ENCODE measurements at regions of chr9 and their contacts with region 1.

Region 1: GRCh38 chr9:91164724-91165520 is 196.8 kb downstream of the AUH start:
- DNase-seq: peak; percentile 82
- H3K4me3 Mint-ChIP-seq: peak overlapping the region; percentile 84
- H3K27ac Mint-ChIP-seq: peak overlapping the region; percentile 98
- H3K4me1 Mint-ChIP-seq: peaks cover 58% of the 10 kb centered on the region
- H3K27me3 Mint-ChIP-seq: no peaks in the 10 kb centered on the region

Region 2: DNA sequence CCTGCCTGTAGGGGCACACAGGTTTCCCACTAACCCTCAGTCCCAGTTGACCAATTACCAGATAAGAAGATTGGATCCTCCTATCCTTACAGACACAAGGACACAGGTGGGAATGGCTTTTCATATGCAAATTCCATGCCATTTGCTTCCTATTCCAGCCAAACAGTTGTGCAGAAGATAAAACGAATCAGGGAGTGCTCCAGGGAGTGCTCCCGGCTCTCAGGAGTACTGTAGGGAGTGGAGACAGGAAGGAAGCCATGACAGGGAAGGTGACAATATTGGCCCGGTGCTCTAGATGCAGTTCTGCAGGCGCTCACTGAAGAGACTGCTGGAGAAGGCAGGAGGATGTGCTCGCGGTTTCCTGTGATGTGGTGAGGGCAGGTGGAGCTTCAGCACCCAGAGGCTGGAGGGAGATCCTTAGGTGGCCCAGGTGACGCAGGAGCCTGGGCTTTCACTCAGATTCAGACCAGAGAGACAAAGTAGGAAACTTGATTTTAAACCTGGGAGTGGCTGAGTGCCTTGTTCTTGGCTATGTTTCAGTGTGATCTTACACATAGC is 63.2 kb before region 1 on chr9:
- intact Hi-C with region 1: loop called (anchors 2 kb)
- DNase-seq: peak; percentile 85
- H3K4me3 Mint-ChIP-seq: peak overlapping the region; percentile 78
- H3K27ac Mint-ChIP-seq: peak overlapping the region; percentile 93
- H3K4me1 Mint-ChIP-seq: peaks cover 64% of the 10 kb centered on the region
- H3K27me3 Mint-ChIP-seq: no peaks in the 10 kb centered on the region

Region 3: GRCh38 chr9:91177661-91178280 is 12.8 kb after region 1 on chr9:
- intact Hi-C with region 1: loop called (anchors 1 kb)
- DNase-seq: peak; percentile 30
- H3K4me3 Mint-ChIP-seq: peak overlapping the region; percentile 41
- H3K27ac Mint-ChIP-seq: peak overlapping the region; percentile 99
- H3K4me1 Mint-ChIP-seq: peaks cover 55% of the 10 kb centered on the region
- H3K27me3 Mint-ChIP-seq: no peaks in the 10 kb centered on the region

Region 4: GRCh38 chr9:91241909-91242308 is 77.0 kb after region 1 on chr9:
- intact Hi-C with region 1: no loop called
- DNase-seq: no peak
- H3K4me3 Mint-ChIP-seq: no peak overlapping the region
- H3K27ac Mint-ChIP-seq: no peak overlapping the region
- H3K4me1 Mint-ChIP-seq: peaks cover 48% of the 10 kb centered on the region
- H3K27me3 Mint-ChIP-seq: no peaks in the 10 kb centered on the region

Region 5: DNA sequence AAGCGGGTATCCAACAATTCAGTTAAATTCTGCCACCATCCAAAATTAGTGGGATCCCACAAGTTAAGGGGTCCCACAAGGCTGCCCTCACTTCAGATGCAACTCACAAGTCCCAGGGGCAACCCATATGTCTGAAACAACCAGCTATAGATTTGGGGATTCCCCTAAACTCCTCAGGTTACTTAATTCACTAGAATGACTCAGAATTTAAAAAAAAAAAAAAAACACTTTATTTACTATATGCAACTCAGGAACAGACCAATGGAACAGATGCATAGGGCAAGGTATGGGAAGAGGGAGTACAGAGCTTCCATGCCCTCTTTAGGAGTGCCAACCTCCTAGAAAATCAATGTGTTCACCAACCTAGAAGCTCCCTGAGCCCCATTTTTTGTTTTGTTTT is 181.7 kb after region 1 on chr9:
- intact Hi-C with region 1: loop called (anchors 5 kb)
- DNase-seq: no peak
- H3K4me3 Mint-ChIP-seq: no peak overlapping the region
- H3K27ac Mint-ChIP-seq: peak overlapping the region; percentile 44
- H3K4me1 Mint-ChIP-seq: peaks cover 61% of the 10 kb centered on the region
- H3K27me3 Mint-ChIP-seq: no peaks in the 10 kb centered on the region

Measured in activated T-helper 2 cell treated with anti-CD3 and anti-CD28 coated beads, Interferon-gamma antibody, Interleukin-2, Interleukin-4, amounts not matched to agents 10 μg/mL and 5 μg/mL and 100 μg/mL, durations not matched to agents 14 hours and 24 hours and 36 hours (primary cell).